H1 (cell line): ENCODE measurements at regions of chr6 and their contacts with region 1.

Region 1: DNA sequence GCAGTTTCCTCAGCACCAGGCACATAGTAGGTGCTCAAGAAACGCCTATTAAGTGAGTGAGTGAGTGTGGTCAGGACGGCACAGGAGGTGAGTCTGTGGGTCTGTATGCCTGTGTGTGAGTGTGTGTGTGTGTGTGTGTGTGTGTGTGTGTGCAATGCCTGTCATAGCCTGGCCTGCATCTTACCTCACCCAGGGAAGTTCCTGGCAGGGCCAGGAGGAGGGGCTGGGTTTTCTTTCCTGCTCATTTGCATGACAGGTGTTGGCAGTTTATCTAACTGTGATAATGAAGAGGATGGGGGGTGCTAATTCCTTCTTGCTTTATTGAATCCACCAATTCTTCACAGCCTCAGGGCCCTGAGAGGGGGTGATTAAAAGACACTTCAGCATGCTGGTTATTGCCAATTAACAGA is 146.7 kb upstream of the MLN start:
- DNase-seq: no peak
- H3K4me3 ChIP-seq: no peak overlapping the region
- H3K27ac ChIP-seq: no peak overlapping the region
- H3K4me1 ChIP-seq: peaks cover 0 to 12% (median 8%) of the 10 kb centered on the region in 4 experiments; a peak in 6 of 7 replicates
- H3K27me3 ChIP-seq: no peaks in the 10 kb centered on the region; a peak in 2 of 7 replicates
- CTCF ChIP-seq: no peak
- EP300 ChIP-seq: no peak
- POLR2A ChIP-seq: no peak
- RAD21 ChIP-seq: no peak

Region 2: GRCh38 chr6:33869826-33870423 is 80.6 kb before region 1 on chr6:
- CTCF ChIA-PET with region 1: interaction called, 10 read pairs
- POLR2A ChIA-PET with region 1: no interaction called
- DNase-seq: peak in 1 of 2 experiments; percentile 56
- H3K4me3 ChIP-seq: no peak overlapping the region
- H3K27ac ChIP-seq: no peak overlapping the region
- H3K4me1 ChIP-seq: peaks cover 0 to 15% (median 10%) of the 10 kb centered on the region in 4 experiments; a peak in 5 of 7 replicates
- H3K27me3 ChIP-seq: 0 out of 7 replicates have a peak, but pooled peaks cover 0 to 1% (median 0%) of the 10 kb centered on the region in 4 experiments
- CTCF ChIP-seq: no peak
- EP300 ChIP-seq: no peak
- POLR2A ChIP-seq: no peak
- RAD21 ChIP-seq: no peak; a peak in 1 of 4 replicates

Region 3: DNA sequence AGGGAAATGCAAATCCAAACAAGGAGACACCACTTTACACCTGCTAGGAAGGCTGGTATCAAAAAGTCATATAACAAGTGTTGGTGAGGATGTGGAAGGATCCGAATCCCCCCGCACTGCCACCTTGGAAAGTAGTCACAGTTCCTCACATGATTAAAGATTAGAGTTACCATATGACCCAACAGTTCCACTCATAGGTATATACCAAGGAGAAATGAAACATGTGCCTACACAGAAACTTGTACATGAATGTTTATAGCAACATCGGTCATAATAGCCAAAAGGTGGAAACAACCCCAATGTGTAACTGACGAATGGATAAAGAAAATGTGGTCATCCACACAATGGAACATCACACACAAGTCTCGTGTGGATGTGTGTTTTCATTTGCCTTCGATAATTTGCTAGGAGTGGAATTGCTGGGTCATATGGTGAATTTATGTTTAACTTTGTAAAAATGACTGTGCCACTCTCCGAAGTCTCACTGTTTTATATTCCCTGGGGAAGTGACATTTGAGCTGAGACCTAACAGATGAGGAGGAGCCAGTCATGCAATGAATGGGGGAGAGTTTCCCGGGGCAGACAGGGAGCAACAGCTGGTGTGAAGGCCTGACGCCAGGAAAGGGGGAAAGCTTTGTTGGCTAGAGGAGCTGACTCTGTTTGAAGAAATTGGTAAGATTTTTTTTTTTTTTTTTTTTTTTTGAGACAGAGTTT is 20.7 kb before region 1 on chr6:
- CTCF ChIA-PET with region 1: interaction called, 17 read pairs
- POLR2A ChIA-PET with region 1: interaction called, 3 read pairs
- DNase-seq: no peak
- H3K4me3 ChIP-seq: no peak overlapping the region
- H3K27ac ChIP-seq: no peak overlapping the region
- H3K4me1 ChIP-seq: peaks cover 0 to 16% (median 8%) of the 10 kb centered on the region in 4 experiments; a peak in 5 of 7 replicates
- H3K27me3 ChIP-seq: peaks cover 0 to 1% (median 0%) of the 10 kb centered on the region in 4 experiments; a peak in 2 of 7 replicates
- CTCF ChIP-seq: no peak
- EP300 ChIP-seq: no peak
- POLR2A ChIP-seq: no peak
- RAD21 ChIP-seq: no peak

Region 4: DNA sequence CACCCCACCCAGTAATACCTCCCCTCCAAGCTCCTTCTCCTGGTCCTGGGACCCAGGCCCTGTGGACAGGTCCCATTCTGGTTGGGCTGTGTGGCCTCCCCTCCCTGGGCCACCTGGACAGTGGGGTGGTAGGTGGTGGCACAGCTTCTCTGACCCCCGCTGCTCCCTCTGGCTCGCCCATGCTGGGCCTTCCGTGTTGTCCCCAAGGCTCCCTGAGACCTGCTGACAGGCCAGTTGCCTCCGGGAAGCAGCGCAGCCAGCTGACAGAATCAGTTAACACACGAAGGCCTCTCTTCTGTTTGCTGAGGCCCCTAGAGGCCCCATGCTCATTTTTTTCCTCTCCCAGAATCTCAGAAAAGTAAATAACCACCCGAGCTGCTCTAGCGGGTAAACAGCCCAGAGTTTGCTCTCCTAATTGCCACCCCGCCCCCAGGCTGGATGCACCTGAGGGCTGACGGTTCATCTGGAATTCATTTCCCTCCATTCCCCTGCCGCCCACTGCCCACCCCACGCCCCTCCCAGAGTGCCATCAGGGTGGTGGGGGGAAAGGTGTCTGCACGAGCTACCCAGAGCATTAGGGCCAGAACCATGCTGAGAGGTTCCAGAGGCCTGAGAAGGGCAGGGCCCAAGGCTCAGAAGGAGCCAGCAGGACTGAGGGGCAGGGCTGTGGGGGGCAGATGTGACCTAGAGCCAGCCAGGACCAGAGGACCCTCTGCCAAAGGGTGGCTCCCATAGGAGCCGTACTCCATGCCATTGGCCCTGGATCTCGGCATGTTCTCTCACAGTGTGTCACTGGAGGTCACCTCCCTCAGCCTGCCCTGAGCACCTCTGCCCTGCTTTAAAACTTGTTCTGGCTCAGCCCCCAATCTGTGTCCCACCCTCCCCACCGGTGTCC is 37.9 kb after region 1 on chr6:
- CTCF ChIA-PET with region 1: interaction called, 10 read pairs
- POLR2A ChIA-PET with region 1: no interaction called
- DNase-seq: no peak
- H3K4me3 ChIP-seq: no peak overlapping the region
- H3K27ac ChIP-seq: no peak overlapping the region
- H3K4me1 ChIP-seq: peaks cover 0 to 11% (median 5%) of the 10 kb centered on the region in 4 experiments; a peak in 2 of 7 replicates
- H3K27me3 ChIP-seq: peaks cover 0 to 2% (median 0%) of the 10 kb centered on the region in 4 experiments; a peak in 2 of 7 replicates
- CTCF ChIP-seq: no peak
- EP300 ChIP-seq: no peak
- POLR2A ChIP-seq: no peak
- RAD21 ChIP-seq: no peak